ENCODE measurements at regions of chr20 and their contacts with region 1.

Region 1: DNA sequence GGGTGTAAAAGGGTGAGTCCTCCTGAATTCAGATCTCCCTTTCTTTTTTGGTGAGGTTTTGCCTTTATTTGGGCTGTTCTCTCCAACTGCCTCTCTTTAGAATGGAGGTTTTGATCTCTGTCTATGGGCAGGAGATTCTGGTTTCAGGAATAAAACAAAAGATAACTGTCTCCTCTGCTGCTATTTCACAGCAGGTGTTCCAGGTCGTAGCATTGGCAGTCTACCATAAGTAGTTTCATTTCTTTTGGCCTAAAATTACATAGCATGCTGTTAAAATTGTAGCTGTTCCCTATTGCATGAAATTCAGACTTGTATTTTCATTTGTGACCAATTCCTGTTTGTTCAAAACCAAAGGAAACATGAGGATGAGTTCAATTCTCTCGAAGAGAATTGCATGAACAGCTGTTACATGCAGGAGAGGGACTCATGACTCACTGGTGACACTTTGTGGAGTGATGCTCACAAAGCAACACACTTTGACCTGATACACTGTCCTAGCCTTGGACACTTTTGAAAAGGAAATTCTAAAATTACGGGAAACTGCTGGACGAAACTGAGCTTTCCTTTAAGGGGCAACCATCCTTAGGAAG is 76.8 kb upstream of the SIRPG start:
- DNase-seq: peak; percentile 46
- H3K4me3 Mint-ChIP-seq: no peak overlapping the region
- H3K27ac Mint-ChIP-seq: no peak overlapping the region
- H3K4me1 Mint-ChIP-seq: peaks cover 34% of the 10 kb centered on the region
- H3K27me3 Mint-ChIP-seq: peaks cover 2% of the 10 kb centered on the region

Region 2: DNA sequence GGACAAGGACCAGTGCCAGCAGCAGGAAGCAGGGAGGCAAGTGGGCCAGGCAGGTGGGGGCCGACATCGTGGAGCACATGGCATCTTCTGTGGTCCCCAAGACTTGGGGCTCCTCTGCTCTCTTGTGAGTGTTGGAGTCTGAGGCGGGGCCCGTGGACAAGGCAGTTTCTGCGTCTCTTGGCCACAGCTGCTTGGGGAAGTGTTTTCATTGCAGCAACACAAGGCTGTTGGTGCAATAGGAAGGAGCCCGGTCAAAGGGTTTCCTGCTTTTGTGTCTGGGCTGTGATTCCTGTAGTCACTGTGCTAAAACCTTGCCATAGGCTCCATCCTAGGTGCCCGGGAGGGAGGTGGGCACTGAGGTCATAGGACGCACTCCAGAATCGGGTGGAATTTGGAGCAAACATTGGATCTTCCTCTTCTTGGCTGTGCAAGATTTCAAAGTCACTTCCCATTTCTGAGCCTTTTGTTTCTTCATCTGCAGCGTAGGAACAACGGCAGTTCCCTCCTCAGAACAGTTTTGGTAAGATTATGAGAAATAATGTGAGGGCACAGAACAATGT is 243.0 kb before region 1 on chr20 and contains the start of gene SIRPB2:
- CTCF ChIA-PET with region 1: no interaction called
- POLR2A ChIA-PET with region 1: no interaction called
- intact Hi-C with region 1: no loop called
- DNase-seq: no peak
- H3K4me3 Mint-ChIP-seq: no peak within 1 kb of the TSS
- H3K27ac Mint-ChIP-seq: no peak within 1 kb of the TSS
- H3K4me1 Mint-ChIP-seq: no peaks in the 10 kb centered on the region
- H3K27me3 Mint-ChIP-seq: peaks cover 18% of the 10 kb centered on the region
- total RNA-seq, gene SIRPB2: not detected

Region 3: DNA sequence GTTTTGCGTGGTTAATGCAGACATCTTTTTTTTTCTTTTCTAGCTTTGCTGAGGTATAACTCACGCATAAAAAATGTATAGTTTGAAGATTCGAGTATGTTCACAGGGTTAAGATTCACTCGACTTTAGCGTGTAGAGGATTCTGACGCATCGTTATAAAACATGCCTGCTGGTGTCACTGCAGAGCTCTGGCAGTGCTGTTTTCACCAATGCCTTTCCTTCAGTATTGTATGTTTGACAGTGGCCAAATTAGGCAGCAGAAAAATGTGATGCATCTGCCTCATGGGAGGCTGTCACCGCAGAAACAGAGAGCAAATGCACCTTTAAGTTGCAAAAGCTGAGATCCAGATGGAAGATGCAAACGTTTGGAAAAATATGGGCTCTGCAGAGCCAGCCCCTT is 225.1 kb before region 1 on chr20:
- CTCF ChIA-PET with region 1: interaction called, 17 read pairs
- POLR2A ChIA-PET with region 1: no interaction called
- intact Hi-C with region 1: loop called (anchors 2 kb)
- DNase-seq: peak; percentile 39
- H3K4me3 Mint-ChIP-seq: no peak overlapping the region
- H3K27ac Mint-ChIP-seq: no peak overlapping the region
- H3K4me1 Mint-ChIP-seq: no peaks in the 10 kb centered on the region
- H3K27me3 Mint-ChIP-seq: peaks cover 9% of the 10 kb centered on the region

Region 4: GRCh38 chr20:1555952-1556351 is 178.4 kb before region 1 on chr20:
- CTCF ChIA-PET with region 1: interaction called, 26 read pairs
- POLR2A ChIA-PET with region 1: no interaction called
- intact Hi-C with region 1: loop called (anchors 1 kb)
- DNase-seq: no peak
- H3K4me3 Mint-ChIP-seq: no peak overlapping the region
- H3K27ac Mint-ChIP-seq: no peak overlapping the region
- H3K4me1 Mint-ChIP-seq: peaks cover 3% of the 10 kb centered on the region
- H3K27me3 Mint-ChIP-seq: no peaks in the 10 kb centered on the region

Region 5: GRCh38 chr20:1588533-1589460 is 145.6 kb before region 1 on chr20:
- CTCF ChIA-PET with region 1: interaction called, 15 read pairs
- POLR2A ChIA-PET with region 1: no interaction called
- intact Hi-C with region 1: loop called (anchors 2 kb)
- DNase-seq: peak; percentile 44
- H3K4me3 Mint-ChIP-seq: no peak overlapping the region
- H3K27ac Mint-ChIP-seq: peak overlapping the region; percentile 88
- H3K4me1 Mint-ChIP-seq: peaks cover 26% of the 10 kb centered on the region
- H3K27me3 Mint-ChIP-seq: no peaks in the 10 kb centered on the region

Region 6: DNA sequence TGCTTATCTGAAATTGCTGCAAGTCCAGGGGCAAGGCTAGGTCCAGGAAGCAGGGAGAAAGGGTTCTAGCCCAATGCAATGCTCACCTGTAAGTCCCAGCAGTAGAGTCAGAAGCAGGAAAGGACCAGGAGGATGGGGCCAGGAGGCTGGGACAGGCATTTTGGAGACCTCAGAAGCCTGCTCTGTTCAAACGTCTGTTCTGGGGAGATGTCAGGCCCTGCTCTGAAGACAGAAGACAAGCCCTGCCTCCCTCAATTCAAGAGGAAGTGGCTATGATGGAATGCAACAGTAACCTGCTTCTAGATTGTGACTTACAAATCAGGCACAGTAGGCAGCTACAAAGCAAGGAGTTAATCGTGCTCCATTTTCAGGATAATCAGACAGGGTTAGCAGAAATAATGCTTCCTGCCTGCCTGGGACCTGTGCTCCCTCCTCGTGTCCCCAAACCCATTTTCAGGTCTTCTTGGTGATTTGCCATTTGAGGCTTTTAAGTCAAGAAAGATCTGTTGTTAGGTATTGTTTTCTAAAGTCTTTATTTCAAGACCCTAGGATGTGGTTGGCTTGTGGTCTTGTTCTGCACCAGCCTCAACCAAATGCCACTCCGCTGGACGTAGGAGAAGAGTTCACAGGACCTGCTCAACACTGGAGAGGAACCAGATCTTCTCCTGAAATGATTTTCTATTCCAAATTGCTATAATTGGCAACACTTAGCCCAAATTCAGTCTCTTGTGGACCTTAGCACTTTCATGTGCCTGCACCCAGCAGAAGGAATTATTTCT is 76.6 kb before region 1 on chr20 and contains the start of gene SIRPG:
- CTCF ChIA-PET with region 1: interaction called, 4 read pairs
- POLR2A ChIA-PET with region 1: no interaction called
- intact Hi-C with region 1: loop called (anchors 5 kb)
- DNase-seq: peak; percentile 63
- H3K4me3 Mint-ChIP-seq: peak within 1 kb of the TSS; percentile 84
- H3K27ac Mint-ChIP-seq: peak within 1 kb of the TSS; percentile 99
- H3K4me1 Mint-ChIP-seq: peaks cover 86% of the 10 kb centered on the region
- H3K27me3 Mint-ChIP-seq: no peaks in the 10 kb centered on the region
- total RNA-seq, gene SIRPG: 27.9 to 28.5 TPM

Region 7: DNA sequence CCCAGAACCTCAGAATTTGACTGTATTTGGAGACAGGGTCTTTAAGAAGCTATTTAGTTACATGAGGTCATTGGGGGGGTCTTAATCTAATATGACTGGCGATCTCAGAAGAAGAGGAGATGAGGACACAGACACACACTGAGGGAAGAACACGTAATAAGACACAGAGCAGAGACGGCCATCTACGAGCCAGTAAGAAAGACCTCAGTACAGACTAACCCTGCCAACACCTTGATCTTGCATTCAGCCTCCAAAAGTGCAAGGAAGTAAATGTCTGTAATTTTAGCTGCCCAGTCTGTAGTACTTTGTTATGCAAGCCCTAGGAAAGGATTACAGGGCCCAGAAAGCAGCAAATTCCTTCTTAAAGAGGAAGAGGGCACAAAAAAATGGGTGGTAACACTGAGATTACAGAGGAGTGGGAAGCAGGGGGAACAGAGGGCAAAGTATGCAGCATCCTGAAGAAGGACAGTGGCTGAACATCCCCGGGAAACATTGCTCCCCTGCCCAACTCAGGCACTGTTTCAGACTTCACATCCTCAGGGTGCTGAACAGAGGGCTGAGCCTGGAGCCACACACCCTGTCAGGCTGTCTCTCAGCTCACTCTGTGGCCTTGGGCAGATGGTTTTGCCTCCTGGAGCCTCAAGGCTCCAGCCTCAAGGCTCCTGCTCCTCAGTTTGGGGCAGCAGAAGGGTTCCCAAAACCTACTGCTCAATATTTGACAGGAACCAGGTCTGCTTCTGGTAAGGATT is 48.9 kb before region 1 on chr20:
- CTCF ChIA-PET with region 1: interaction called, 4 read pairs
- POLR2A ChIA-PET with region 1: no interaction called
- intact Hi-C with region 1: loop called (anchors 5 kb)
- DNase-seq: no peak
- H3K4me3 Mint-ChIP-seq: peak overlapping the region; percentile 65
- H3K27ac Mint-ChIP-seq: peak overlapping the region; percentile 64
- H3K4me1 Mint-ChIP-seq: peaks cover 56% of the 10 kb centered on the region
- H3K27me3 Mint-ChIP-seq: no peaks in the 10 kb centered on the region

Region 8: GRCh38 chr20:1710484-1710883 is 23.9 kb before region 1 on chr20:
- CTCF ChIA-PET with region 1: no interaction called
- POLR2A ChIA-PET with region 1: no interaction called
- intact Hi-C with region 1: no loop called
- DNase-seq: no peak
- H3K4me3 Mint-ChIP-seq: no peak overlapping the region
- H3K27ac Mint-ChIP-seq: no peak overlapping the region
- H3K4me1 Mint-ChIP-seq: peaks cover 10% of the 10 kb centered on the region
- H3K27me3 Mint-ChIP-seq: no peaks in the 10 kb centered on the region

Region 9: DNA sequence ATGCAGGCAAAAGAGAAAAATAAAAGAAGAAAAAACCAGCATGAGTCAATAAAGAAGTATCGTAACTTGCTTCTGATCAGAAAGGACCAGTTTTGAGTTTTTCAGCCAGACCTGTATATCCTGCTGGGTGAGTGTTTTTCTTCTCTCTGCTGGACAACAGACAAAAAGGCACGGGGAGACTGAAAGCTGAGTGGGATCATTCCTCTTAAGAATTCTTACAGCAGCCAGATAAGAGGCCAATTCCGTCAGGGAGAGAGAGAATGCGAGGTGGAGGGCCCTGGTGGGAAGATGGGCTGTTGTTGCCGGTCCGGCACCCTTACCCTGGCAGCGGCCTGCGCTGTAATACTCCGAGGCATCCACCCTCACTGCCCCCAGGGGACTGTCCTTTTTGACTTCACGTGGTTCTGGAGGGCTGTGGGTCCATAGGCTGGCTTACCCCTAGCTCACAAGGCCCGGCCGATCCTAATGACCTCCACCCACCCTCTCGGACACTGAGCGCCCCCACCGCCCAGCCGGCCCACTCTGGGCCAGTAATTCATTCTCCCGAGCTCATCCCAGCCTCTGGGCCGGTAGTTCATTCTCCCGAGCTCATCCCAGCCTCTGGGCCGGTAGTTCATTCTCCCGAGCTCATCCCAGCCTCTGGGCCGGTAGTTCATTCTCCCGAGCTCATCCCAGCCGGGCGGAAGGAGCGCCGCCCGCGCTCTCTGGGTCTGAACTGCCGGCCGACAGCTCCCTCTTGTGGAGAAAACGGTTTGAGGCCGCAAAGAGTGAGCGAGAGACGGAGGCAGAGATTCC is 42.5 kb after region 1 on chr20:
- CTCF ChIA-PET with region 1: interaction called, 16 read pairs
- POLR2A ChIA-PET with region 1: no interaction called
- intact Hi-C with region 1: no loop called
- DNase-seq: peak; percentile 89
- H3K4me3 Mint-ChIP-seq: peak overlapping the region; percentile 73
- H3K27ac Mint-ChIP-seq: no peak overlapping the region
- H3K4me1 Mint-ChIP-seq: peaks cover 15% of the 10 kb centered on the region
- H3K27me3 Mint-ChIP-seq: peaks cover 3% of the 10 kb centered on the region